Activated CD4-positive, alpha-beta memory T cell treated with anti-CD3 and anti-CD28 coated beads, Interleukin-2, amount 10 ng/mL, durations not matched to agents 7 days and 5 days (primary cell): ENCODE measurements at regions of chr11 and their contacts with region 1.

Region 1: GRCh38 chr11:72144807-72145560 is 9.5 kb downstream of the FOLR3 start:
- DNase-seq: no peak
- H3K4me3 Mint-ChIP-seq: no peak overlapping the region
- H3K27ac Mint-ChIP-seq: no peak overlapping the region
- H3K4me1 Mint-ChIP-seq: peaks cover 25% of the 10 kb centered on the region
- H3K27me3 Mint-ChIP-seq: peaks cover 14% of the 10 kb centered on the region

Region 2: GRCh38 chr11:71964641-71965040 is 180.3 kb before region 1 on chr11:
- CTCF ChIA-PET with region 1: no interaction called
- POLR2A ChIA-PET with region 1: no interaction called
- DNase-seq: no peak
- H3K4me3 Mint-ChIP-seq: no peak overlapping the region
- H3K27ac Mint-ChIP-seq: no peak overlapping the region
- H3K4me1 Mint-ChIP-seq: peaks cover 13% of the 10 kb centered on the region
- H3K27me3 Mint-ChIP-seq: no peaks in the 10 kb centered on the region

Region 3: GRCh38 chr11:72072348-72072747 is 72.6 kb before region 1 on chr11:
- CTCF ChIA-PET with region 1: interaction called, 10 read pairs
- POLR2A ChIA-PET with region 1: no interaction called
- DNase-seq: no peak
- H3K4me3 Mint-ChIP-seq: no peak overlapping the region
- H3K27ac Mint-ChIP-seq: peak overlapping the region; percentile 32
- H3K4me1 Mint-ChIP-seq: peaks cover 73% of the 10 kb centered on the region
- H3K27me3 Mint-ChIP-seq: no peaks in the 10 kb centered on the region

Region 4: GRCh38 chr11:72091005-72091691 is 53.8 kb before region 1 on chr11:
- CTCF ChIA-PET with region 1: interaction called, 11 read pairs
- POLR2A ChIA-PET with region 1: interaction called, 3 read pairs
- DNase-seq: peak; percentile 66
- H3K4me3 Mint-ChIP-seq: no peak overlapping the region
- H3K27ac Mint-ChIP-seq: no peak overlapping the region
- H3K4me1 Mint-ChIP-seq: peaks cover 18% of the 10 kb centered on the region
- H3K27me3 Mint-ChIP-seq: no peaks in the 10 kb centered on the region

Region 5: GRCh38 chr11:72102946-72103753 is 41.8 kb before region 1 on chr11 and contains the start of gene LAMTOR1:
- CTCF ChIA-PET with region 1: interaction called, 20 read pairs
- POLR2A ChIA-PET with region 1: interaction called, 10 read pairs
- DNase-seq: peak; percentile 99
- H3K4me3 Mint-ChIP-seq: peak within 1 kb of the TSS; percentile 87
- H3K27ac Mint-ChIP-seq: peak within 1 kb of the TSS; percentile 84
- H3K4me1 Mint-ChIP-seq: peaks cover 40% of the 10 kb centered on the region
- H3K27me3 Mint-ChIP-seq: no peaks in the 10 kb centered on the region
- total RNA-seq, gene LAMTOR1: 72.7 to 76.9 TPM

Region 6: DNA sequence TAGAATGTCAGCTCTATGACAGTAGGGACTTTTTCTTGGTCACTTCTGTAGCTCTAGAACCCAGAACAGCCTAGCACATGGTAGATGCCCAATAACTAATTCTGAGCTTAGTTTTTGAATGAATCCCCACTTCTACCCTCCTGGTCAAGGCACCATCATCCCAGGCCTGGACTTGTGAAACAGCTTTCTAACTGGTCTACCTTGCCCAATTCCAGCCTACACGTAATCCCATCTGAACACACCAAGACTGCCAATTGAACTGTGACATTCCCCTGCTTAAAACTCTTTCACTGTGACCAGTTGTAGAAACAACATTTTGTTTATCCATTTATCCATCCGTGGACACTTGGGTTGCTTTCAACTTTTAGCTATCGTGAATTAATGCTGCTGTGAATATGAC is 15.6 kb before region 1 on chr11:
- CTCF ChIA-PET with region 1: interaction called, 11 read pairs
- POLR2A ChIA-PET with region 1: no interaction called
- DNase-seq: no peak
- H3K4me3 Mint-ChIP-seq: no peak overlapping the region
- H3K27ac Mint-ChIP-seq: no peak overlapping the region
- H3K4me1 Mint-ChIP-seq: no peaks in the 10 kb centered on the region
- H3K27me3 Mint-ChIP-seq: peaks cover 38% of the 10 kb centered on the region

Region 7: GRCh38 chr11:72160319-72160718 is 15.3 kb after region 1 on chr11:
- CTCF ChIA-PET with region 1: interaction called, 14 read pairs
- POLR2A ChIA-PET with region 1: no interaction called
- DNase-seq: no peak
- H3K4me3 Mint-ChIP-seq: no peak overlapping the region
- H3K27ac Mint-ChIP-seq: no peak overlapping the region
- H3K4me1 Mint-ChIP-seq: no peaks in the 10 kb centered on the region
- H3K27me3 Mint-ChIP-seq: peaks cover 23% of the 10 kb centered on the region

Region 8: GRCh38 chr11:72179804-72180396 is 34.9 kb after region 1 on chr11:
- CTCF ChIA-PET with region 1: interaction called, 13 read pairs
- POLR2A ChIA-PET with region 1: no interaction called
- DNase-seq: no peak
- H3K4me3 Mint-ChIP-seq: no peak overlapping the region
- H3K27ac Mint-ChIP-seq: no peak overlapping the region
- H3K4me1 Mint-ChIP-seq: peaks cover 10% of the 10 kb centered on the region
- H3K27me3 Mint-ChIP-seq: peaks cover 13% of the 10 kb centered on the region

Region 9: DNA sequence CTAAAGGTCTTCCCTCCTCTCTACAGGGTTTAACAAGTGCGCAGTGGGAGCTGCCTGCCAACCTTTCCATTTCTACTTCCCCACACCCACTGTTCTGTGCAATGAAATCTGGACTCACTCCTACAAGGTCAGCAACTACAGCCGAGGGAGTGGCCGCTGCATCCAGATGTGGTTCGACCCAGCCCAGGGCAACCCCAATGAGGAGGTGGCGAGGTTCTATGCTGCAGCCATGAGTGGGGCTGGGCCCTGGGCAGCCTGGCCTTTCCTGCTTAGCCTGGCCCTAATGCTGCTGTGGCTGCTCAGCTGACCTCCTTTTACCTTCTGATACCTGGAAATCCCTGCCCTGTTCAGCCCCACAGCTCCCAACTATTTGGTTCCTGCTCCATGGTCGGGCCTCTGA is 50.9 kb after region 1 on chr11:
- CTCF ChIA-PET with region 1: no interaction called
- POLR2A ChIA-PET with region 1: no interaction called
- DNase-seq: no peak
- H3K4me3 Mint-ChIP-seq: no peak overlapping the region
- H3K27ac Mint-ChIP-seq: no peak overlapping the region
- H3K4me1 Mint-ChIP-seq: no peaks in the 10 kb centered on the region
- H3K27me3 Mint-ChIP-seq: no peaks in the 10 kb centered on the region

Region 10: DNA sequence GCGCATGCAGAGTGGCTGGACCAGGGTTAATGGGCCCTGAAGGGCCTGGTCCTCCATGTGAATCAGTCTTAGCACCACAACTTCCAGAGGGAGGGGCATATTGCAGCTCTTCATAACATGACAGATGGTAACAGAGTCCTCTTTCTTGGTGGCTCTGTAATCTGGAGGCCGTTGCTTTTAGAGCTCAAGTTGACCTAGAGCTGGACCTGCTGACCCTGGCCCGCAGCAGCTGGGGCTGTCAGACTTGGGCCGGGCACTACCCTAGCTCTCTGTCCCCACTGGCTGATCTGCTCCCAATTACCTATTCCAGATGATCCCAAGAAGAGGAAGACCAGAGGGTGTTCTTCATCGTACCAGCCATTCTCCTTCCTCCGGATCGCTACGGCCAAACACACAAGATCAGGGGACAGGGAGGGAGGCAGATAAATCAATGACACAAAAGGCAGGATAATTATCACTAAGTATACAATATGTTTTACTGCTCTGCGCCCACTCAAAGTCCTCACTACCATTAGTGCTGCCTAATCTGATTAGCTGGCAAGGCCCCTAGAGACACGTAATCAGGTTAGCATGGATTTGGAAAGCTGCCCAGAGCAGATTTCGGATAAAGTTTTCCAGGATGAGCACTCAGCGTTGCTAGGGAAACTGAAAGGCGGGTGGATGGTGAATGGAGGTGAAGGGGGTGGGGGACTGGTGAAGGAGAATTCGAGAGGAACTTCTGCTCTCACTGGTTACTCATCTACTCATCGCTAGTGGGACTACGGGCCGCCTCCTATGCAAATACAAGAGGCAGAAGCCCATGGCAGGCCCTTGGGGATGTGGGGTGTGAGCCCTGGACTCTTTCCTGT is 163.5 kb after region 1 on chr11:
- CTCF ChIA-PET with region 1: no interaction called
- POLR2A ChIA-PET with region 1: no interaction called
- DNase-seq: no peak
- H3K4me3 Mint-ChIP-seq: no peak overlapping the region
- H3K27ac Mint-ChIP-seq: no peak overlapping the region
- H3K4me1 Mint-ChIP-seq: no peaks in the 10 kb centered on the region
- H3K27me3 Mint-ChIP-seq: no peaks in the 10 kb centered on the region